ENCODE measurements at regions of chr11 and their contacts with region 1.

Region 1: GRCh38 chr11:126310228-126310991 is 6.5 kb downstream of the DCPS start:
- DNase-seq: peak; percentile 73 to 88 (median 84)
- H3K4me3 ChIP-seq: peak overlapping the region in 1 of 59 donors; percentile 7
- H3K27ac ChIP-seq: peak overlapping the region in 2 of 59 donors; percentile 21 to 32
- H3K27me3 ChIP-seq: no peaks in the 10 kb centered on the region
- CTCF ChIP-seq: peak; percentile 77 to 96 (median 90)

Region 2: GRCh38 chr11:126416542-126417090 is 106.2 kb after region 1 on chr11:
- intact Hi-C with region 1: loop called in 1 of 2 experiments (anchors 5 kb)
- DNase-seq: peak; percentile 87 to 91 (median 90)
- H3K4me3 ChIP-seq: peak overlapping the region; percentile 33 to 73 (median 60)
- H3K27ac ChIP-seq: peak overlapping the region; percentile 55 to 95 (median 89)
- H3K27me3 ChIP-seq: no peaks in the 10 kb centered on the region
- CTCF ChIP-seq: peak in 21 of 56 donors; percentile 4 to 45 (median 21)

Region 3: DNA sequence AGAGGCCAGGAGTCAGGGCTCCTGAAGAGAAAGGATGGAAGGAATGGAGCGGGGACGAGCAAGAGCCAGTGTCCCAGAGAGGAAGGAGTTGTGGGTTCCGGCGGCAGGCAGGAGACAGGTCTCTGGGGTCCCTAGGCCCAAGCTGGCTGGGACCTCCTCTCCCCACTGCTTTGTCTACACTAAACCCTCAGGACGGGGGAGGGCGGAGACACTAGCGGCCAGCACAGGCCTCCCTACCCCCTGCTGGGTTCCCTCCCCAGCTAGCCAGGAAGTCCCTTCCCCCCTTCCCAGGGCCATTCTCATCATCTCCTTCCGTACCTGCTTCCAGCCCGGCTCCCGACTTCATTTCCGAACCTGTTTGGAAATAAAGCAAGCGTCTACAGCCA is 124.5 kb after region 1 on chr11:
- intact Hi-C with region 1: loop called in 1 of 2 experiments (anchors 5 kb)
- DNase-seq: no peak
- H3K4me3 ChIP-seq: no peak overlapping the region
- H3K27ac ChIP-seq: no peak overlapping the region
- H3K27me3 ChIP-seq: no peaks in the 10 kb centered on the region
- CTCF ChIP-seq: no peak

Region 4: DNA sequence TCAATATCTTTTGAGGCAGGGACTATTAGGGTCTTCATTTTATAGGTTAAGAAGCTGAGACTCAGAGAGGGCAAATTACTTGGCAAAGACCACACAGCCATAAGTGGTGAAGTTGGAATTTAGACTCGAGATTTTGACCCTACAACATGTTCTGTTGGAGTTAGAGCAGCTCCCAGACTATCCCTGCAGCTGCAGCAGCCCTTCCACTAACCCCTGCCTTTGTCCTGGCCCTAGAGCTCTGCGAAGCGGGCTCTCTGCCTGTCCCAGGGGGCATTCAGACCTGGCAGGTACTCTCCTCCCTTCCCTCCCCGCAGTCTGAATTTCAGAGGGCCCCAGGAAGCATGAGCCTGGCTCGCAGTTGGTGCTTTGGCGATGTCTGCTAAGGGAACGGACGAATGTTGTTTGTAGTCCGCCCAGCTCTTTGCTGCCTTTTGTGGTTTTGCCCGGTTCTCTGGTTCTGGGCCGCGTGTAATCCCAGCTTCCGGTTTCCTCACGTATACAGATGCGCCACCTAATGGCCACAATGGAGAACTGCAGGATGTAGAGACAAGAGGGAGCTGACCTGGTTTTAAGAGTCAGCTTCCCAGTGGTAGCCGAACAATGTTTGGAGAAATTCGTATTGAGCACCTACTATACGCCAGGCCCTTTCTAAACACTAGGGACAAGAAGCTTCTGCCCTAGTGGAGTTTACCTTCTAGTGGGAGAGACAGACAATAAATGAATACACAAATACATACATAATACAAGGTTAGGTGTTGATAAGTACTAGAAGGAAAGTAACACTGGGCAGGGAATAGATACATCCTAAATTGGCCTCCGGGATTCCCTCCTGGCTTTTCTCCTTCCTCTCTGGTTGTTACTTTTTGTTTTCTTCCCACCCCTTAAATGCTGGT is 170.2 kb after region 1 on chr11:
- intact Hi-C with region 1: loop called (anchors 1 to 2 kb)
- DNase-seq: peak; percentile 66 to 90 (median 86)
- H3K4me3 ChIP-seq: peak overlapping the region in 21 of 59 donors; percentile 3 to 51 (median 18)
- H3K27ac ChIP-seq: peak overlapping the region in 50 of 59 donors; percentile 23 to 90 (median 72)
- H3K27me3 ChIP-seq: no peaks in the 10 kb centered on the region
- CTCF ChIP-seq: peak; percentile 88 to 99 (median 97)

Measured in dorsolateral prefrontal cortex (tissue), 120 donors.